HCT116 (cell line): ENCODE measurements at regions of chr10 and their contacts with region 1.

Region 1: DNA sequence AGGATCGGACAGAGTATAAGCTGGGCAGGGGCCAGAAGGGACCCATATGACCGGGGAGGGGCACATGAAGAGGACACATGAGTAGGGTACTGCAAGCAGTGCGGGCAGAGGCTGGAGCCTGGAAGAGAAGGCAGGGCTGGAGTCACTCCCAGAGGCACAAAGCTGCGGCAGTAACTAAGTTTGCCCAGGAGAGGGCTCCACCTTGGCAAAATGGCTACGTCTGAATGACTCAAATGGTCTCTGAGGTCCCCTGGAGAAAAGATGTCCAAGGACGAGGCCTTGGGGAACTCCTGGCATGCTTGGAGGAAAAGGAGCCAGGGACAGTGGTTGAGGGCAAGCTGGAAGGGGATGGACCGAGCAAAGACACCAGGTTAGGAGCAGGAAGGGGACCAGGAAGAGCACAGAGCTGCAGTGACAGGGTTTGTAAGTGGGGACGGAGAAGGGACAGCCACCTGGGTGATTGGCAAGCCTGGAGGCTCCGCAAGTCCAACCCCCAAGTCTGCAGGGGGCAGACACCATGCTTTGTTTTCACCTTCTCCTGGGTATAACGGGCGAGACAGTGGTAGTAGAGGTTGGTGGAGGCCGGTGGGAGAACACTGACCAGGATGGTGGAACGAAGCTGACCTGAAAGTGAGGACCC is 43.1 kb upstream of the LBX1 start:
- DNase-seq: peak; percentile 69
- ATAC-seq: peak; percentile 96
- H3K4me3 ChIP-seq: no peak overlapping the region
- H3K27ac ChIP-seq: no peak overlapping the region; the same call in 1 of the 2 replicates
- H3K4me1 ChIP-seq: peaks cover 9 to 15% of the 10 kb centered on the region in 2 experiments
- H3K27me3 ChIP-seq: no peaks in the 10 kb centered on the region
- CTCF ChIP-seq: peak; percentile 79 to 98 (median 96)
- POLR2A ChIP-seq: no peak
- RAD21 ChIP-seq: peak; percentile 68

Region 2: DNA sequence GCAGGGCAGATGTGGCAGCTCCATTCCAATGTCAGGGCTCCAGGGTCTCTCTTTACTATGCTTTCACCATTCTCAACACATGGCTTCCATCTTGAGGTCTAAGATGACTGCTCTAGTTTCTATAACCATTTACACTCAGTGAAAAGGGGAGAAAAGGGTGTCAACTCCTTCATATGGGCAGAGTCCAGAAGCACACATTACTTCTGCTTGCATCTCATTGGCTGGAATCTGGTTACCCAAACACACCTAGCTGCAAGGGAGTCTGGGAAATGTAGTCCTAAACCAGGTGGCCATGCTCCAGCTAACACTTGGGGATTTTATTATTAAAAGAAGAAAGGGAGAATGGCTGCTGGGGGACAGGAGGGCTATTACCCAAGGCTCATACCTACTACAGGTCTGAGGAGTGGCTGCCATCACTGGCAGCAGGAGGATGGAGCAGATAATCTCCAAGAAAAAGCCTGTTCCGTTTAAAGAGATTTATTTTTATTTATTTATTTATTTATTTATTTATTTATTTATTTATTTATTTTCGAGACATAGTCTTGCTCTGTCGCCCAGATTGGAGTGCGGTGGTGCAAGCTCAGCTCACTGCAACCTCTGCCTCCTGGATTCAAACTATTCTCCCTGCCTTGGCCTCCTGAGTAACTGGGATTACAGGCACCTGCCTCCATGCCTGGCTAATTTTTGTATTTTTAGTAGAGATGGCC is 14.0 kb before region 1 on chr10:
- CTCF ChIA-PET with region 1: interaction called, 10 read pairs
- POLR2A ChIA-PET with region 1: interaction called, 3 read pairs
- RAD21 ChIA-PET with region 1: no interaction called
- intact Hi-C with region 1: no loop called
- DNase-seq: peak; percentile 89
- ATAC-seq: peak; percentile 99
- H3K4me3 ChIP-seq: no peak overlapping the region
- H3K27ac ChIP-seq: no peak overlapping the region
- H3K4me1 ChIP-seq: peaks cover 0 to 5% of the 10 kb centered on the region in 2 experiments; a peak in 1 of 4 replicates
- H3K27me3 ChIP-seq: no peaks in the 10 kb centered on the region
- CTCF ChIP-seq: no peak
- POLR2A ChIP-seq: no peak
- RAD21 ChIP-seq: no peak

Region 3: GRCh38 chr10:101287997-101288635 is 15.8 kb after region 1 on chr10:
- CTCF ChIA-PET with region 1: interaction called, 12 read pairs
- POLR2A ChIA-PET with region 1: interaction called, 3 read pairs
- RAD21 ChIA-PET with region 1: no interaction called
- intact Hi-C with region 1: no loop called
- DNase-seq: peak; percentile 41
- ATAC-seq: peak; percentile 86
- H3K4me3 ChIP-seq: no peak overlapping the region
- H3K27ac ChIP-seq: no peak overlapping the region
- H3K4me1 ChIP-seq: no peaks in the 10 kb centered on the region; a peak in 1 of 4 replicates
- H3K27me3 ChIP-seq: no peaks in the 10 kb centered on the region
- CTCF ChIP-seq: peak; percentile 34 to 57 (median 45); a peak in 5 of 6 replicates
- POLR2A ChIP-seq: no peak
- RAD21 ChIP-seq: peak; percentile 72

Region 4: GRCh38 chr10:101319241-101319915 is 47.0 kb after region 1 on chr10:
- CTCF ChIA-PET with region 1: no interaction called
- POLR2A ChIA-PET with region 1: no interaction called
- RAD21 ChIA-PET with region 1: no interaction called
- intact Hi-C with region 1: no loop called
- DNase-seq: no peak
- ATAC-seq: no peak
- H3K4me3 ChIP-seq: no peak overlapping the region
- H3K27ac ChIP-seq: no peak overlapping the region
- H3K4me1 ChIP-seq: no peaks in the 10 kb centered on the region
- H3K27me3 ChIP-seq: no peaks in the 10 kb centered on the region; the same call in 1 of the 2 replicates
- CTCF ChIP-seq: no peak
- POLR2A ChIP-seq: no peak
- RAD21 ChIP-seq: no peak

Region 5: GRCh38 chr10:101476383-101476782 is 204.0 kb after region 1 on chr10:
- CTCF ChIA-PET with region 1: no interaction called
- POLR2A ChIA-PET with region 1: no interaction called
- RAD21 ChIA-PET with region 1: no interaction called
- intact Hi-C with region 1: no loop called
- DNase-seq: no peak
- ATAC-seq: no peak
- H3K4me3 ChIP-seq: no peak overlapping the region
- H3K27ac ChIP-seq: no peak overlapping the region
- H3K4me1 ChIP-seq: no peaks in the 10 kb centered on the region
- H3K27me3 ChIP-seq: no peaks in the 10 kb centered on the region
- CTCF ChIP-seq: no peak
- POLR2A ChIP-seq: no peak
- RAD21 ChIP-seq: no peak